Right lobe of liver (tissue), 6 donors: ENCODE measurements at regions of chr17 and their contacts with region 1.

Region 1: GRCh38 chr17:31452101-31452500 is 60.6 kb downstream of the RAB11FIP4 start:
- DNase-seq: no peak
- ATAC-seq: no peak
- H3K4me3 ChIP-seq: no peak overlapping the region
- H3K27ac ChIP-seq: no peak overlapping the region
- H3K4me1 ChIP-seq: no peaks in the 10 kb centered on the region
- H3K27me3 ChIP-seq: no peaks in the 10 kb centered on the region
- CTCF ChIP-seq: no peak
- POLR2A ChIP-seq: no peak

Region 2: DNA sequence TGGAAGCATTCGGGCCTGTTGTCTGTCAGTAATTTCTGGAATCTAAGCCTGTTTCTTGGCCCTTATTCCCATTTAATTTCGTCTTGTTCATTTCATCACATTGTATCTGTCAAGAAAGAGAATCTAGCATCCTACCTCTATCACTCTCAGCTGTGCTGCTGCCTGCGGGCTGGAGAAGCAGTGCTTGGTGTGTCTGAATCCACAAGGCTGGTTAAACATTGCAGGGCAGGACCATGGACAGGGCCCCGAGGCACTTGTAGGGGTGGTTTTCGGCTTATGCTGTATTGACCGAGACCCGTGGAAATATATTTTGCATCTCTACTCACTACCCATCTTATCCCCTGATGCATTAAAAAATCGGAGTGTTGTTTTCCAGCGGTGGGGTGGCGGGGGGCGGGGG is 57.6 kb before region 1 on chr17:
- intact Hi-C with region 1: loop called in 1 of 2 experiments (anchors 10 kb)
- DNase-seq: peak in 2 of 3 donors; percentile 51 to 53
- ATAC-seq: peak in 3 of 4 donors; percentile 33 to 78 (median 74)
- H3K4me3 ChIP-seq: no peak overlapping the region
- H3K27ac ChIP-seq: no peak overlapping the region
- H3K4me1 ChIP-seq: peaks cover 0 to 5% (median 0%) of the 10 kb centered on the region in 4 donors
- H3K27me3 ChIP-seq: no peaks in the 10 kb centered on the region
- CTCF ChIP-seq: no peak
- POLR2A ChIP-seq: no peak